WTC11 (cell line): ENCODE measurements at regions of chr20 and their contacts with region 1.

Region 1: GRCh38 chr20:53623454-53624211 is 30.0 kb upstream of the ZNF217 start:
- DNase-seq: peak; percentile 42
- ATAC-seq: peak; percentile 86
- H3K4me3 Mint-ChIP-seq: peak overlapping the region; percentile 60
- H3K27ac Mint-ChIP-seq: peak overlapping the region; percentile 90
- H3K4me1 Mint-ChIP-seq: peaks cover 37% of the 10 kb centered on the region
- H3K27me3 Mint-ChIP-seq: no peaks in the 10 kb centered on the region
- CTCF ChIP-seq: no peak

Region 2: DNA sequence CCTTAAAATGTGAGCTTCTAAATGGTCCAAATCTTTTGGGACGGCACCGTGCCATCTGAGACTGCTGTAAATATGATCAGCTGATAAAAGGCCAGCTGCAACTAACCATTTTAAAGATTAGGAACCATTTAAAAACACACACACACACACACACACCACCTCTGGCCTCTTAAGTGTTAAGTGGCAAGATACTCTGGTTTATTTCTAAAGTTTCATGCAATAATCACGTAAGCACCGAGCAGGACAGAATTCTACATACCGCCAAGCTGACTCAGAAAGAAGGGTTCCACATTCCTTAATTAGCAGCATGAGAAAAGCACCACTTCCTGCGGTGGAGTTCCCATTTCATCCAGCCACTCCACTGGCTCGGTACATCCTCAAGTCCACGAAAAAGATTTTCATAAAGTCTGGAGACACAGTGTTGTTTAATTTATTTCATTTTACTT is 12.2 kb before region 1 on chr20:
- CTCF ChIA-PET with region 1: interaction called, 10 read pairs
- POLR2A ChIA-PET with region 1: interaction called, 7 read pairs
- DNase-seq: no peak
- ATAC-seq: peak; percentile 55
- H3K4me3 Mint-ChIP-seq: no peak overlapping the region
- H3K27ac Mint-ChIP-seq: peak overlapping the region; percentile 88; the same call in 1 of the 2 replicates
- H3K4me1 Mint-ChIP-seq: peaks cover 49% of the 10 kb centered on the region
- H3K27me3 Mint-ChIP-seq: no peaks in the 10 kb centered on the region
- CTCF ChIP-seq: no peak

Region 3: DNA sequence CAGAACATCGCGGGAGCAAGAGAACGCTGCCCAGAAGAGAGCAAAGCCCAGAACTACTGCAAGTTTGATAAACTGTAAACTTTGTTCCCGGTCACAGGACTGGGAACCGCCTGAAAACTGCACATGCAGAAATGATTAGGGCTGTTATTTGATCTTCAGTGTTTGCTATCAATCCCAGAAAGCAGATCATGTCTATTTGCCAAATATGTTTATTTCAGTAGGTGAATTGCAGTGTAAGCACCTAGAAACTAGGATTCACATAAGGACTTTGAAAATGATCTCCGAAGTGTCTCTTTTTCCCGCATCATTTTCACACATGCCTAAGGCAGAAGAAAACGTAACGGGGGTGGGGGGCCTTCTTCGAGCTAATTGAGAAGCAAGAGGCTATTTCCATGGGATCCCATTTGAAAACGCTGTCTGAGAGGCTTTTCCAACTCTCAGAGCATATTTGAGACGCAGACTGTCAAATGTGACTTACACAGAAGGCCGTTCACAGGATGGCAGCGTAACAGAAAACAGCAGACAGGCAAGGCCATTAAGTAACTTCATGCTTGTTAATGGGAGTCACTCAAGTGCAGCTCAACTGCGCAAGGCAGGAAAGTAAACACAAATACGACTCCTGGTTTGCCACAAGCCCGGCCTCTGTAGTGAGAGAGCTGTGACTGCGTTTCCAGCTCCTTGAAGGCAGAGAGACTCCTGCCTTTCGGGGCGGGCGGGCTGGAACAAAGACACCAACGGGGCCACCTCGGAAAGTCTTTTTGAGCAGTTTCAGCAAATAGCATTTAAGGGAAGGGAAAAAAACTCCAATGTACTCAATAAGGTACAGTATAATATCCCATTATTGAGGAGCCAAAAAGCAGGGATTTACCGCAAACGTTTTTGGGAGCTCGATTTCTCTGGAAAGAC is 114.7 kb after region 1 on chr20:
- CTCF ChIA-PET with region 1: interaction called, 3 read pairs
- POLR2A ChIA-PET with region 1: interaction called, 12 read pairs
- DNase-seq: peak; percentile 64
- ATAC-seq: peak; percentile 71
- H3K4me3 Mint-ChIP-seq: peak overlapping the region; percentile 53
- H3K27ac Mint-ChIP-seq: peak overlapping the region; percentile 99
- H3K4me1 Mint-ChIP-seq: peaks cover 77% of the 10 kb centered on the region
- H3K27me3 Mint-ChIP-seq: no peaks in the 10 kb centered on the region
- CTCF ChIP-seq: no peak